ENCODE measurements at regions of chr11 and their contacts with region 1.

Region 1: GRCh38 chr11:111379602-111380136 is 594 bp upstream of the POU2AF1 start:
- DNase-seq: no peak
- ATAC-seq: peak in 5 of 8 donors; percentile 15 to 41 (median 28)
- H3K4me3 ChIP-seq: peak overlapping the region in 8 of 10 donors; percentile 2 to 43 (median 30)
- H3K27ac ChIP-seq: peak overlapping the region in 1 of 10 donors; percentile 20
- H3K4me1 ChIP-seq: peaks cover 0 to 14% (median 6%) of the 10 kb centered on the region in 9 donors
- H3K27me3 ChIP-seq: peaks cover 0 to 24% (median 8%) of the 10 kb centered on the region in 7 donors
- CTCF ChIP-seq: no peak

Region 2: DNA sequence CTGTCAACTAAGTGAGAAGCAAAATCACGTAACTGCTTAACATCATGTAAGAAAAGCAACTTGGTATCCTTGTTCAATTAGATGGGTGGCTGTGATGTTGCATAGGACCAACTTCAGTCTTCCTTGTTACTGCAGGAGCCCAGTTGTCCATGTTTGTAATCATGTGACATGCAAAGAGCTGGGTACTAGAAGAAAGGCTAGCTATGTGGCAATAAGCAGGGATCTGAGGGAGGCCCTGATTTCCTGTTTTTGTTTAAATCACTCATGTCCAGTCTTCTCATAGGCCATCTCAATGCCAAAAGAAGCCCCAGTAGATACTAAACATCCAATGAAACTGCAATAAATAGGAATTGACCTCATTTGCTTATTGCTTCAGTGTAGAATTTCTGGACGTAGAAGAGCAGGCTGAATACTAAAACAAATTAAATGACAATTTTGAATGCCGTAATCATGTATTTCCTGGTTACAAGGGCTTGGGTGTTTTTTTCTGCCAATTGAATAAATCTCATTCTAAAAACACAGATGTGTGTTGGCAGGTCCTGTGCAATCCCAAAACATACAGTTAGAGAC is 526.7 kb before region 1 on chr11:
- intact Hi-C with region 1: no loop called
- DNase-seq: no peak
- ATAC-seq: no peak
- H3K4me3 ChIP-seq: no peak overlapping the region
- H3K27ac ChIP-seq: no peak overlapping the region
- H3K4me1 ChIP-seq: peaks cover 0 to 8% (median 0%) of the 10 kb centered on the region in 9 donors
- H3K27me3 ChIP-seq: no peaks in the 10 kb centered on the region
- CTCF ChIP-seq: no peak

Region 3: DNA sequence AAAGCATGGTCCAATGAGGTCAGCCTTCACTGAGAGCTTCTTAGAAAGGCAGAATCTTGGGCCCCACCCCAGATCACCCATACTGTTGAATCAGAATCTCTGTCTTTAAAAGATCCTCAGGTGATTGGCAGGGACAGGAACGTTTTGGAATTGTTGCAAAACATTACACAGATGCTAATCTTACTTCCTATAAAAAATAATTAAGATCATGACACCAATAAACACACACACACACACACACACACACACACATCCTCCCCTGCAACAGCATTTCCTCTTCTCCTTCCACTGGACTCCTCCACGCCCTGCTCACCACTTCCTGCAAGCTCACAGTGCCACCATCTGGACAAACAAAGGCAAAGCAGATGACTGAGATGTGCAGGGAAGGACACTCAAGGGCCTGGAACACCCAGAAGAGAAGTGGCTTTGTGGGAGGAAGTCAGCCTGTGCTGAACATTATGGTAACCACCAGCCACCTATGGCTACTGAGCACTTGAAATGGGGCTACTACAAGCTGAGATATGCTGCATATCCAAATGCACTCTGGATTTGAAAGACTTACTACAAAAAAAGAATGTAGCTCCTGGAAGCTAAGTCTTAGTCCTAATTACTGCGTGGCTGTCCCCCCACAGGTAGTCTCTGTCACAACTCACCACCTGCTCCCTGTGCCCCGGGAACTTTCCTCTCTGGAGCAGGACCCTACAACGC is 66.9 kb after region 1 on chr11:
- intact Hi-C with region 1: loop called in 1 of 10 experiments (anchors 10 kb)
- DNase-seq: peak; percentile 48 to 86
- ATAC-seq: peak; percentile 88 to 97 (median 96)
- H3K4me3 ChIP-seq: no peak overlapping the region
- H3K27ac ChIP-seq: peak overlapping the region in 5 of 10 donors; percentile 2 to 44 (median 21)
- H3K4me1 ChIP-seq: peaks cover 0 to 18% (median 12%) of the 10 kb centered on the region in 9 donors
- H3K27me3 ChIP-seq: peaks cover 0 to 11% (median 0%) of the 10 kb centered on the region in 7 donors
- CTCF ChIP-seq: peak; percentile 43 to 88 (median 77)